ENCODE measurements at regions of chr17 and their contacts with region 1.

Region 1: GRCh38 chr17:81018044-81018802 is 16.7 kb upstream of the BAIAP2 start:
- DNase-seq: peak; percentile 67
- H3K4me3 Mint-ChIP-seq: peak overlapping the region; percentile 70
- H3K27ac Mint-ChIP-seq: peak overlapping the region; percentile 98
- H3K4me1 Mint-ChIP-seq: peaks cover 48% of the 10 kb centered on the region
- H3K27me3 Mint-ChIP-seq: no peaks in the 10 kb centered on the region

Region 2: GRCh38 chr17:81002409-81003361 is 15.5 kb before region 1 on chr17:
- CTCF ChIA-PET with region 1: interaction called, 6 read pairs
- POLR2A ChIA-PET with region 1: interaction called, 16 read pairs
- DNase-seq: no peak
- H3K4me3 Mint-ChIP-seq: peak overlapping the region; percentile 36
- H3K27ac Mint-ChIP-seq: peak overlapping the region; percentile 16
- H3K4me1 Mint-ChIP-seq: peaks cover 19% of the 10 kb centered on the region
- H3K27me3 Mint-ChIP-seq: peaks cover 41% of the 10 kb centered on the region

Region 3: DNA sequence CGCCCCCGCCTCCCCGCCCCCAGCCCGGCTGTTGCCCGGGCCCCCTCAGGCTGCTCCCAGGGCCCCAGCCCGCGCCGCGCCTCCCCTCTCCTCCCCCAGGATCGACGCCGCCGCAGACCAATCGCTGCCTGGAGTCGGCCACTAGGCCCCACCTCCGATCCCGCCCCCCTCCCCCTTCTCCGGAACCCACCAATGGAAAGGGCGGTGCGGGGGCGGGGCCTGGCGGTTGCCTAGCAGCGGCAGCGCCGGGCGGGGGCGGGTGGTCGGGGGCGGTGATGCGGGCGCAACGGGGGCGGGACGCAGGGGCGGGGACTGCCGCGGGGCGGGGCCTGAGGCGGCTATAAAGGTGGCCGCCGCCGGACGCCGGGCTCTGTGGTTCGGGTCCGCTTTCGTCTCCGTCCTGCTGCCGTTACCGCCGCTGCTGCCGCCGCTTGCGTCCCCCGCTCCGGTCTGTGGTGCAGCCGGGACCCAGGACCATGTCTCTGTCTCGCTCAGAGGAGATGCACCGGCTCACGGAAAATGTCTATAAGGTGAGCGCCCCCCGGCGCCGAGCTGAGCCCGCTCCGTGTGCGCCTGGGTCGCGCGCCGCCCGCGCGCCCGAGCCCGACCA is 16.7 kb after region 1 on chr17 and contains the start of gene BAIAP2:
- CTCF ChIA-PET with region 1: interaction called, 10 read pairs
- POLR2A ChIA-PET with region 1: interaction called, 17 read pairs
- DNase-seq: peak; percentile 95
- H3K4me3 Mint-ChIP-seq: peak within 1 kb of the TSS; percentile 80
- H3K27ac Mint-ChIP-seq: no peak within 1 kb of the TSS
- H3K4me1 Mint-ChIP-seq: peaks cover 13% of the 10 kb centered on the region
- H3K27me3 Mint-ChIP-seq: peaks cover 42% of the 10 kb centered on the region
- total RNA-seq, gene BAIAP2: 1.5 to 2.4 TPM

Region 4: DNA sequence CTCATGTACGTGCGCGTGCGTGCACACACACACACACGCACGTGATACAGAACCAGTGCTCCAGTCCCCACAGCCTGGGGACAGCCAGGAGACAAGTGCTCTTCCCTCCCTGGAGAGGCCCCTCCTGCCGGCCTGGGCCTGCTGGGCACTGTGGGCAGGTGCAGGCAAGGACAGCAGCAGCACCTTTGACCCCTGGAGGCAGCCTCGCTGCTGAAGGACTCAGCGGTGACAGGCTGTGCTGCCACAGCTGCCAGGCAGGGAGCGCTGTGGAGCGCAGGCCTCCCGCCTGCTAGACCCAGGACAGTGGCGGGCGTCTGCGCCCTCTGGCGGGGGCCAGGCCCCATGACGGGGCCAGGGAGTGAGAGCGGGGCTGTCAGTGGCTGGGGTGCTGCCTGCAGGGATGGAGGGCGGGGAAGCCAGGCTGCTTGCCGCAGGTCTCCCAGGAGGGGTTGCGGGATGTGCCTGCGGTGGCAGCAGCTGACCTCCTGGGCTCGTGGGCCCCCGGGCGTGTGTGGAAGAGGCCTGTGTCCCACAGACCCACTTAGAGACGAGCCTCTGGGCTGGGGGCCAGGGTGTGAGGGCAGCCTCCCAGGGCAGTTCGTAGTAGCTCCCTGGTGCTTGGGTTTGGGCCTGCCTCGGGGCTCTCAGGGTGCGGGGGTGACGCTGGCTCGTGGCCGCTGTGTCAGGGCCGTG is 83.5 kb after region 1 on chr17:
- CTCF ChIA-PET with region 1: interaction called, 20 read pairs
- POLR2A ChIA-PET with region 1: interaction called, 3 read pairs
- DNase-seq: peak; percentile 90
- H3K4me3 Mint-ChIP-seq: no peak overlapping the region
- H3K27ac Mint-ChIP-seq: no peak overlapping the region
- H3K4me1 Mint-ChIP-seq: peaks cover 2% of the 10 kb centered on the region
- H3K27me3 Mint-ChIP-seq: peaks cover 4% of the 10 kb centered on the region

Measured in activated CD4-positive, alpha-beta memory T cell treated with anti-CD3 and anti-CD28 coated beads, Interleukin-2, amount 10 ng/mL, durations not matched to agents 7 days and 5 days (primary cell).